Activated CD4-positive, alpha-beta memory T cell treated with anti-CD3 and anti-CD28 coated beads, Interleukin-2, amount 10 ng/mL, durations not matched to agents 7 days and 5 days (primary cell): ENCODE measurements at regions of chr22 and their contacts with region 1.

Region 1: DNA sequence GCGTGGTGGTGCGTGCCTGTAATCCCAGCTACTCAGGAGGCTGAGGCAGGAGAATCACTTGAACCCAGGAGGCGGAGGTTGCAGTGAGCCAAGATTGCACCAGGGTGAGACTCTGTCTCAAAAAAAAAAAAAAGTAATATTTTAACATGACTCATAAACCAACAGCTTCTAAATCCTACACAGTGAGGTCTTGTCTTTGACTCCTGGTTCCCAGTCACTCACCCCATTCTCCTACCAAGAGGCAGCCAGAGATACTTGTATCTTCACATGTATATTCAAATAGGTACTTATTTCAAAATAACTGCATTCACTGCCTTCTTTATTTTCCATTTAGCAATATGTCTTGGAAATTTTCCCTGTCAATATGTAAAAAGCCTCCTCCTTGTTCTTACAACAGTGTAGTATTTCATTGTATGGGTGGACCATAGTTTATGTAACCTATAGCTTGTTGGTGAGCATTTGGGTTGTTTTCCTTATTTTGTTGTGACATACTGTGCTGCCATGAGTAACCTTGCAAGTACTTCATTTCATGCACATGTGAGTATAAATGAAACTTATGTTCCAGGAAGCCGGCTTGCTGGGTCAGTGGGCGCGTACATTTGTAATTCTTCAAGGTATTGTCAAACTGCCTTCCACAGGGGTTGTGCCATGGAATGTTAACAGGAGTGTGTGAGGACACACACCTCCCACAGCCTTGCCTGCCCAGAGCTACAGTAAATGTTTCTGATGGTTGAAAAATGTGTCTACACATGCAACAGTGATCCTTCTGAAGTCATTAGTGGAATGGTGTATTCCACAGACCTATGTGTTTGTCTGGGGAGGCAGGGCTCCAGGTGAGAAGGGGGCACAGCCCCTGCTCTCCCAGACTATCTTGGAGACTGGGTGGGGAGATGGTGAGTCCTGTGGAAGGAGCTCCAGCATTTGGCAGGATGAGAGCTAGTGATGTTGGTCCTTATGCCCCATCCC is 47.9 kb downstream of the OSBP2 start:
- DNase-seq: peak; percentile 50
- H3K4me3 Mint-ChIP-seq: peak overlapping the region; percentile 21
- H3K27ac Mint-ChIP-seq: peak overlapping the region; percentile 90
- H3K4me1 Mint-ChIP-seq: peaks cover 83% of the 10 kb centered on the region
- H3K27me3 Mint-ChIP-seq: no peaks in the 10 kb centered on the region

Region 2: GRCh38 chr22:30649430-30650007 is 93.1 kb before region 1 on chr22:
- CTCF ChIA-PET with region 1: interaction called, 4 read pairs
- POLR2A ChIA-PET with region 1: interaction called, 17 read pairs
- DNase-seq: peak; percentile 88
- H3K4me3 Mint-ChIP-seq: no peak overlapping the region
- H3K27ac Mint-ChIP-seq: peak overlapping the region; percentile 90
- H3K4me1 Mint-ChIP-seq: peaks cover 52% of the 10 kb centered on the region
- H3K27me3 Mint-ChIP-seq: no peaks in the 10 kb centered on the region

Region 3: DNA sequence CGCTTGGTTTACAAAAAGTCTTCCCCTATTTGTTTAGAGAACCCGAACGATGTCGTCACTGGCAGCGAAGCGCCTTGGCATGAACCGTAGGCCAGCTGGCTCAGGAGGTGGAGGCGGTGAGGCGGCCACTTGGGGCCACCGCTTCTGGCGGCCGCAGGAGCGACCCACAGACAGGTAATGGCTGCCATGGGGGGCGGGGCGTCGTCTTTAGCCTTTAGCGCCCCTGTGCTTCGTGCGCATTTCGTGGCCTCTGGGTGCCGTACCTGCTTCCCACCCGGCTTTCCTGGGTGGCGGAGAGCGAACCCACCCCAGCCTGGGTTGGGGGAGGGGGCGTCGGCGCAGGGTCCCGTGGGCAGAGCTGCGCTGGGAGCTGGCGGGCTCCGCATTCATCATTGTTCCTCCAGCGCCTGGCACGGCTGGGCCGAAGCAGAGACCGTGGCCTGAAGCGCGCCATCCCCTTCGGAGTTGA is 48.4 kb before region 1 on chr22:
- CTCF ChIA-PET with region 1: interaction called, 5 read pairs
- POLR2A ChIA-PET with region 1: interaction called, 11 read pairs
- DNase-seq: peak; percentile 69
- H3K4me3 Mint-ChIP-seq: peak overlapping the region; percentile 87
- H3K27ac Mint-ChIP-seq: peak overlapping the region; percentile 53
- H3K4me1 Mint-ChIP-seq: peaks cover 25% of the 10 kb centered on the region
- H3K27me3 Mint-ChIP-seq: no peaks in the 10 kb centered on the region

Region 4: DNA sequence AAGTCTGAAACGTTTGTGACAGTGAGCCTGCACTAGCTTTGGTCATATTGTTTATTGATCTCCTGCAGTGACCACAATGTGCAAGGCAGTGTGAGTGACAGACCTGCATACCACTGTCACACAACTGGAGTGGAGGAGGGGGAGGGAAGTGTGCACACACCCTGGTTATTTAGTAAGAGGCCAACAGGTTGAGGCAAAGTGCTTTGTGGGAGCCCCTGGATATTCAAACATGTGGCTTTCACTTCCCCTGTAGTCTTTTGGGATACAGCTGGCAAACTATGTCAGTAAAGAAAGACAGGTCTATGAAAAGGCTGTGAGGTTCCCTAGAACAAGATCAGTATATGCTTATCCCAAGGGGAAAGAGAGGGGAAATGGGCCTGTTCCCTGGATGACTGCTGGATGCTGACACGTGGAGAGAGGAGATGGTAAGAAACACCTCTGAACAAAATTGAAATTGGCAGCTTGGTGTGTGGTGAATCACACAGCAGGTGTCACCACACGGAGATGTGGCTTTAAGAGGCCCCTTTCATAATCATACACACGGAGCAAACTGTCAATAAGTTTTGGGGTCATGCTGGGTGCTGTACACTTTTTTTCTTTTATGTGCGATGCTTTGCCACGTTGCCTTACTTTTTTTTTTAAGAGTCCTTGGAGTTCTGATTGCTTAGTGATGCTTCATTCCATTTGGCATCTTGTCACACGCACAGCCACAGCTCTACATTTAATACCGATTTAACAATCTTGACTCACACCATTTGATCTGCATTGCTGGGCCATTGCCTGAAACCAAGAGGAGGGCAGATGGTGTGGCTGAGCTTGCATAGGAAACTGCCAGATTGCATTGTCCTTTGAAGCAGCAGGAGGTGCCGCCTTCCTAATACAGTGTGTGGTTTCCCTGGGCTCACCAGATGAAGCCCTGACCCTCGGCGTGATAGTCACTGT is 36.6 kb before region 1 on chr22:
- CTCF ChIA-PET with region 1: interaction called, 3 read pairs
- POLR2A ChIA-PET with region 1: interaction called, 11 read pairs
- DNase-seq: peak; percentile 45
- H3K4me3 Mint-ChIP-seq: no peak overlapping the region
- H3K27ac Mint-ChIP-seq: peak overlapping the region; percentile 76
- H3K4me1 Mint-ChIP-seq: peaks cover 41% of the 10 kb centered on the region
- H3K27me3 Mint-ChIP-seq: no peaks in the 10 kb centered on the region

Region 5: DNA sequence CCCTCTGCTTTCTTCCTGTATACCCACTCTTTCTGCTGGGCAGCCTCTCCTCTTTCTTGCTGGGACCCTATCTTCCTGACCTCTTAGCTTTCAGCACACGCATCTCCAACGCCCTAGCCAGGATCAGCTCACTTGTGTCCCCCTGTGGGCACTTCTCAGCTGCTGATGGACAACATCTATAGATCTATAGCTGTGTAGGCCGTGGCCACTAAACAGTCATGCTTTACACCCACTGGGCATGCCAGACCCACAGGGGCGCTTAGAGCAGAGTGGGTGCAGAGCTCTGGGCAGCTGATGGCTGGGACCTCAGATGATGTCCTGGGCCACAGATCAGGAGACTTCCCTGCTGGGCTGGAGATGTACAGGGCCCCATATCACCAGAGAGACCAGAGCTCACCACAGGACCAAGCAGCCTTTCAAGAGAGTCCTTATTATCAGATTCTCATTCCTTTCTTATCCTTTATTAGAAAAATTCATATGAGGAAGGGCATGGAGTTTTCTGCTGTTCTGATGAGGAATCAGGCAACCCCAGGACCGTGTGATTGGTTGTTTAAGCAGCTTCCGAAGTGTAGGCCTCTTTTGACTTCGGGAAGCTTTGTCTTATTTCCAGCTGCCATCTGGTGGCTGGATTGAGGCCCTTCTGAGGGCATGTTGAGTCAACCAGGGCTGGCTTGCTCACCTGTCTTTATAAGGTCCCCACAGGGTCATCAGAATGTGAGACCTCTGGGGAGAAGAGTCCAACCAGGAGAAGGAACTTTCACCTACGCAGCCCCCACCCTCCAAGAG is 12.6 kb after region 1 on chr22:
- CTCF ChIA-PET with region 1: interaction called, 40 read pairs
- POLR2A ChIA-PET with region 1: interaction called, 24 read pairs
- DNase-seq: peak; percentile 74
- H3K4me3 Mint-ChIP-seq: no peak overlapping the region
- H3K27ac Mint-ChIP-seq: no peak overlapping the region
- H3K4me1 Mint-ChIP-seq: peaks cover 17% of the 10 kb centered on the region
- H3K27me3 Mint-ChIP-seq: no peaks in the 10 kb centered on the region